ENCODE measurements at regions of chr5 and their contacts with region 1.

Region 1: DNA sequence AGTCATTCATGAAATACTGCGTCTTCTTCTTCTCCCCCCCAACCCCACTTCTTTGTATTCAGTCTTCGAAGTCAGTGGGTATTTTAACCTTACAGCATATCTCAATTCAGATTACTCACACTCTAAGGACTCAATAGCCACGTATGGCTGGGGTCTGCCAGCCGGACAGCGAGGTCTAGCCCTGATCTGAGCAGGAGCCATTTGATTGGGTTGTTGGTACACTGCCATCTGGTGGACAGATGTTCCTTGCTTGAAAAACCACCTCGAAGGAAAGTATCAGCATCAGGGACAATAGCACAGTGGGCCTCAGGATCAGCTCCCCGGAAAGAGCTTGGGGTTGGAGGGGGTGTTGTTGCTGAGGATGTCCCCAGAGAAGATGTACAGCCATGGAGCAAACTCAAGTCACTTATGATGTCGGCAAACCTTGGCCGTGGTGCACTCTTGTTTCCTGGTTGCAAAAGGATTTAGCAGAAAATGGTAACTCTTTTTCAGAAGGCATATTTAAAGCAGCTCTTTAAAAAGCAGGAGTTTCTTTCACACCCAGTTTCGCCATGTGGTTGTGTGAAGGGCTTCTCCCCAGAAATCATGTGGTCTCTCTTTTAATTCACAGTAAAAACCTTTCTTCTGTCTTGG is 31.7 kb upstream of the KCNMB1 start:
- DNase-seq: peak in 2 of 4 donors; percentile 56 to 74
- ATAC-seq: peak; percentile 90
- H3K4me3 ChIP-seq: no peak overlapping the region
- H3K27ac ChIP-seq: no peak overlapping the region
- H3K4me1 ChIP-seq: peaks cover 0 to 8% of the 10 kb centered on the region in 2 donors
- H3K27me3 ChIP-seq: peaks cover 0 to 24% of the 10 kb centered on the region in 2 donors
- CTCF ChIP-seq: peak; percentile 58 to 80

Region 2: DNA sequence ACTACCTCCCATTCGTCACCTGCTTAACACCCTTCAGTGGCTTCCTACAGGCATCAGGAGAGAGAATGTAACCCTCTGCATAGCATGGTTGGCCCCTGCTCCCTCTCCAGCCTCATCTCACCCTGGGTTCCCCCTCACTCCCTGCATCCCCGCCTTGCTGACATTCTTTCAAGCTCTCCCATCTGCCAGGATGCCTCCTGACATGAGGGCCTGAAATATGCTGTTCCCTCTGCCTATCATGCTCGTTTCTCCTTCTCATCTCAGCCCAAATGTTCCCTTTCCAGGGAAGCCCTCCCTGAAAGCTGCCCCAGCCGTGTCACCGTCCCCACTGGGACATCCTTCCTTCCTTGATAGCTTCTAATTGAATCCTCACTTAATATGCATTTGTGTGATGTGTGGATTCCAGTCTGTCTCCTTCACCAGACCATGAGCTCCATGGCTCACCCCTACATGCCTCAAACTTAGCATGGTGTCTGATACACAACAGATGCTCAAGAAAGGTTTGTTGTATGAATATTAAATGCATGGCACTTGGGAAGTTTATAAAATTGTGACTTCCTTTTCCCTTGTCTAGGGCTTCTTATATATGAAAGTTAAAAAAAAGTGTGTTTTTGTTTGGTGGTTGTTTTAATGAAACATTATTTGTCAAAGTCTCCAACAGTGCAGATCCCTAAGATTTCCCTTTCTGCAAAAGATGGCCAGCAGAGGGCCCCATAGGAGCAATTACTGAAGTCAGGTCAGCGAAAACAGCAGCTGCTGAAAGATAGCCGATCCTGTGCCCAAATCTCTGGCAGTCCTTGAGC is 195.4 kb before region 1 on chr5:
- intact Hi-C with region 1: loop called in 1 of 2 experiments (anchors 5 kb)
- DNase-seq: peak in 3 of 4 donors; percentile 63 to 79 (median 65)
- ATAC-seq: peak; percentile 87
- H3K4me3 ChIP-seq: no peak overlapping the region
- H3K27ac ChIP-seq: no peak overlapping the region
- H3K4me1 ChIP-seq: no peaks in the 10 kb centered on the region
- H3K27me3 ChIP-seq: no peaks in the 10 kb centered on the region
- CTCF ChIP-seq: peak; percentile 74 to 78

Region 3: GRCh38 chr5:170278611-170279452 is 142.1 kb before region 1 on chr5:
- intact Hi-C with region 1: loop called in 1 of 2 experiments (anchors 10 kb)
- DNase-seq: peak in 2 of 4 donors; percentile 75 to 89
- ATAC-seq: peak; percentile 64
- H3K4me3 ChIP-seq: peak overlapping the region in 1 of 2 donors; percentile 8
- H3K27ac ChIP-seq: peak overlapping the region in 1 of 2 donors; percentile 80
- H3K4me1 ChIP-seq: peaks cover 8 to 98% of the 10 kb centered on the region in 2 donors
- H3K27me3 ChIP-seq: no peaks in the 10 kb centered on the region
- CTCF ChIP-seq: no peak

Measured in left lung (tissue), 14 donors.